Natural killer cell (primary cell): ENCODE measurements at regions of chr11 and their contacts with region 1.

Region 1: GRCh38 chr11:32154275-32154674 is 63.4 kb downstream of the RCN1 start:
- DNase-seq: peak in 1 of 2 donors; percentile 43
- ATAC-seq: peak; percentile 57 to 80 (median 69)
- H3K4me3 ChIP-seq: no peak overlapping the region
- H3K4me3 Mint-ChIP-seq: no peak overlapping the region
- H3K27ac ChIP-seq: no peak overlapping the region
- H3K27ac Mint-ChIP-seq: peak overlapping the region in 1 of 2 donors; percentile 45
- H3K4me1 ChIP-seq: peaks cover 6% of the 10 kb centered on the region
- H3K4me1 Mint-ChIP-seq: peaks cover 15 to 31% of the 10 kb centered on the region in 2 donors
- H3K27me3 ChIP-seq: no peaks in the 10 kb centered on the region
- H3K27me3 Mint-ChIP-seq: peaks cover 3 to 17% of the 10 kb centered on the region in 2 donors
- CTCF ChIP-seq: peak; percentile 26

Region 2: DNA sequence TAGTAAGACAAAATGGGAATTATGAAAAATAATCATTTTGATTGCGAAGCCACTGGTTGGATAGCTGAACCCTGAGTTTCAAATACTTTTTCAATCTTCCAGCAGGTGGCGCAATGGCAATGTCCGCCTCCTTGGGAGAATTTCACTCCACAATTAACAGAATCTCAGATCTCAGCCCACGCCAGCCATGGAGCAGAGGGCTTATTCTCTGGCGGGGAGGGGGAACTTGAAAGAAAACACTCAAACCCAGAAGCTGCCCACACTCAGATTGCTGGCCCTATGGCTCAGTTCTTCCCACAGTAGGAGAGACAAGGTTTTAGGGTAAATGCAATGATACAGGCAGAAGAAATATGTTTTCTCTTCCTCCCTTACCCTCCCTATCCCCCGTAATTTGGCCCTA is 102.1 kb before region 1 on chr11:
- intact Hi-C with region 1: loop called (anchors 1 kb)
- DNase-seq: peak; percentile 35 to 76
- ATAC-seq: peak in 2 of 3 donors; percentile 61
- H3K4me3 ChIP-seq: no peak overlapping the region
- H3K4me3 Mint-ChIP-seq: no peak overlapping the region
- H3K27ac ChIP-seq: no peak overlapping the region
- H3K27ac Mint-ChIP-seq: no peak overlapping the region
- H3K4me1 ChIP-seq: peaks cover 2% of the 10 kb centered on the region
- H3K4me1 Mint-ChIP-seq: peaks cover 0 to 4% of the 10 kb centered on the region in 2 donors
- H3K27me3 ChIP-seq: no peaks in the 10 kb centered on the region
- H3K27me3 Mint-ChIP-seq: peaks cover 16 to 66% of the 10 kb centered on the region in 2 donors
- CTCF ChIP-seq: peak; percentile 88

Region 3: DNA sequence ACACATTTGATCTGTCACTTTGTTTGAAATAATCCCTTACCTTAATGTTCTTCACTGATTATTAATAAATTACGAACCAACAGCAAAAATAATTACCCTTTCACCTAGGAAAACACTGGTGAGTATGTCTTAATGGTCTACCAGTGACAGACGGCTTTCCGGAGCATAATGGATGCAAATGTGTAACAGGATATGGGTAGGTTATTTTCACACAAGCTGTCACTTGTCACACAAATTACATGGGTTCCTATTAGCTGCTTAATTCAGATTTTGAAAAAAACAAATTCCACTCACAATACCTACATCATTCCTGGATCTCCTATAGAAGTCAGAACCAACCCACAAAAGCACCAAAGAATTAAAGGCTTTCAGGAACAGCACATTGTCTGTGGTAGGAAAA is 153.2 kb after region 1 on chr11:
- intact Hi-C with region 1: no loop called
- DNase-seq: no peak
- ATAC-seq: no peak
- H3K4me3 ChIP-seq: no peak overlapping the region
- H3K4me3 Mint-ChIP-seq: no peak overlapping the region
- H3K27ac ChIP-seq: no peak overlapping the region
- H3K27ac Mint-ChIP-seq: no peak overlapping the region
- H3K4me1 ChIP-seq: no peaks in the 10 kb centered on the region
- H3K4me1 Mint-ChIP-seq: no peaks in the 10 kb centered on the region
- H3K27me3 ChIP-seq: no peaks in the 10 kb centered on the region
- H3K27me3 Mint-ChIP-seq: peaks cover 5 to 18% of the 10 kb centered on the region in 2 donors
- CTCF ChIP-seq: no peak